ENCODE measurements at regions of chr1 and their contacts with region 1.

Region 1: GRCh38 chr1:25031966-25032667 is 102.0 kb upstream of the RUNX3 start:
- DNase-seq: peak; percentile 43 to 94 (median 57)
- ATAC-seq: peak; percentile 76
- H3K4me3 ChIP-seq: no peak overlapping the region
- H3K4me3 Mint-ChIP-seq: peak overlapping the region; percentile 32
- H3K27ac ChIP-seq: peak overlapping the region; percentile 84
- H3K27ac Mint-ChIP-seq: peak overlapping the region; percentile 84
- H3K4me1 ChIP-seq: peaks cover 99% of the 10 kb centered on the region
- H3K4me1 Mint-ChIP-seq: peaks cover 71% of the 10 kb centered on the region
- H3K27me3 ChIP-seq: no peaks in the 10 kb centered on the region
- H3K27me3 Mint-ChIP-seq: no peaks in the 10 kb centered on the region
- CTCF ChIP-seq: no peak

Region 2: DNA sequence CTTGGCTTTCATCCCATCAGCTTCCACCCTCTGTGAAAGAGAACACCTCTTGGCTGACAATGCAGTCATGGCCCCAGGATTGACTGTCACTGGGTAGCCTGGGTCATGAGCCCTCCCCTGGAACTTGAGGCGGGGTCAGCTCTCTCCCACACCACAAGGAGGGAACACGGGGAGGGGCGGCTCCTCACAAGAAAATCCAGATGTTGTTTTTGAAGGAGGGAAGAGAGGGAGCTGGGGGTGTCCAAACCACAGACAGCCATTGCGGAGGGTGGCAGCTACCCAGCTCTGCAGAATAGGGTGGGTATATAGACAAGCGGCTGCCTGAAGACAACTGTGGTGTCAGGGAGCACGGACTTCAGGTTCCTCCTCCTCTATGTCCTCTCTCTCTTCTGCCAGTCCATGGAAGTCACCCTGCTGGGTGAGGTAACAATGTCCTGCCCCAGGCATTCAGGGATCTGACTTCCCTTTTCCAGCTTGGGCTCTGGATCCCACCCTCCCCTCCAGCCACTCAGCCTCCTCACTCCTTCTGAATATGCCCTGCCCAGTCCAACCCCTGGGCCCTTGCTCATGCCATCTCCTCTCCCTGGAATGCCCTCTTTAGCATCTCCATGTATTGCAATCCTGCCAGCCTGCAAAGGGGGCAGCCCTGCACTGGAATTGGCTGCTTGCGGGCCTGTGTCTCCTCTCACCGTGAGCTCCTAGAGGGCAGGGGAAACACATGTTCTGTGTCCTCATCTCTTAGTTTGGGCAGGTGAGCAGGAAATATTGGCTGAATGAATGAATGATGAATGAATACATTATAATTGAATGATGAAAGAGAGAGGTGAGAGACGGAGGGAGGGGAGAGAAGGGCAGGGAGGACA is 41.1 kb before region 1 on chr1:
- CTCF ChIA-PET with region 1: interaction called, 9 read pairs
- POLR2A ChIA-PET with region 1: interaction called, 5 read pairs
- intact Hi-C with region 1: loop called (anchors 2 to 5 kb)
- DNase-seq: peak in 5 of 14 experiments; percentile 31 to 66 (median 39)
- ATAC-seq: peak; percentile 24
- H3K4me3 ChIP-seq: no peak overlapping the region
- H3K4me3 Mint-ChIP-seq: peak overlapping the region; percentile 18
- H3K27ac ChIP-seq: peak overlapping the region; percentile 79 to 87
- H3K27ac Mint-ChIP-seq: peak overlapping the region; percentile 93
- H3K4me1 ChIP-seq: peaks cover 99% of the 10 kb centered on the region
- H3K4me1 Mint-ChIP-seq: peaks cover 93% of the 10 kb centered on the region
- H3K27me3 ChIP-seq: no peaks in the 10 kb centered on the region
- H3K27me3 Mint-ChIP-seq: no peaks in the 10 kb centered on the region
- CTCF ChIP-seq: no peak

Region 3: DNA sequence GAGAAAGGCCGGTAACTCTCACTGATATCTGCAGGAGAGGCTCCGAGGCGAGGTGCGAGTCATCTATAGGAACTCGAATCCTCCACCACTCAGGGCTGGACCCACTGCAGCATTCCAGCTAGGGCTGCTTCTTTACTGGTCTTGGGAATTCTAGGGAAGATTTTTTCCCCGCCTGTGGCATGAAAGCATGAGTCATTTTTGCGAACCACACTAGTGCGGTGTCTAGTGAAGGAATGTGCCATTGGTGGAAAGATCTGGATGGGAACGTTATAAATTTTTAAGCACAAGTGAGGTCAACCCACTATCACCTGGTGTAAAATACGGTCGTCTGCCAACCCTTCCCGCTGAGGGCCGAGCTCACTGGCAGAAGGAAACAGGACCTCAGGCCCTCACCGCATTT is 150.5 kb after region 1 on chr1:
- CTCF ChIA-PET with region 1: no interaction called
- POLR2A ChIA-PET with region 1: no interaction called
- intact Hi-C with region 1: no loop called
- DNase-seq: peak in 1 of 14 experiments; percentile 8
- ATAC-seq: no peak
- H3K4me3 ChIP-seq: no peak overlapping the region
- H3K4me3 Mint-ChIP-seq: no peak overlapping the region
- H3K27ac ChIP-seq: no peak overlapping the region
- H3K27ac Mint-ChIP-seq: no peak overlapping the region
- H3K4me1 ChIP-seq: no peaks in the 10 kb centered on the region
- H3K4me1 Mint-ChIP-seq: no peaks in the 10 kb centered on the region
- H3K27me3 ChIP-seq: no peaks in the 10 kb centered on the region
- H3K27me3 Mint-ChIP-seq: no peaks in the 10 kb centered on the region
- CTCF ChIP-seq: no peak

Region 4: DNA sequence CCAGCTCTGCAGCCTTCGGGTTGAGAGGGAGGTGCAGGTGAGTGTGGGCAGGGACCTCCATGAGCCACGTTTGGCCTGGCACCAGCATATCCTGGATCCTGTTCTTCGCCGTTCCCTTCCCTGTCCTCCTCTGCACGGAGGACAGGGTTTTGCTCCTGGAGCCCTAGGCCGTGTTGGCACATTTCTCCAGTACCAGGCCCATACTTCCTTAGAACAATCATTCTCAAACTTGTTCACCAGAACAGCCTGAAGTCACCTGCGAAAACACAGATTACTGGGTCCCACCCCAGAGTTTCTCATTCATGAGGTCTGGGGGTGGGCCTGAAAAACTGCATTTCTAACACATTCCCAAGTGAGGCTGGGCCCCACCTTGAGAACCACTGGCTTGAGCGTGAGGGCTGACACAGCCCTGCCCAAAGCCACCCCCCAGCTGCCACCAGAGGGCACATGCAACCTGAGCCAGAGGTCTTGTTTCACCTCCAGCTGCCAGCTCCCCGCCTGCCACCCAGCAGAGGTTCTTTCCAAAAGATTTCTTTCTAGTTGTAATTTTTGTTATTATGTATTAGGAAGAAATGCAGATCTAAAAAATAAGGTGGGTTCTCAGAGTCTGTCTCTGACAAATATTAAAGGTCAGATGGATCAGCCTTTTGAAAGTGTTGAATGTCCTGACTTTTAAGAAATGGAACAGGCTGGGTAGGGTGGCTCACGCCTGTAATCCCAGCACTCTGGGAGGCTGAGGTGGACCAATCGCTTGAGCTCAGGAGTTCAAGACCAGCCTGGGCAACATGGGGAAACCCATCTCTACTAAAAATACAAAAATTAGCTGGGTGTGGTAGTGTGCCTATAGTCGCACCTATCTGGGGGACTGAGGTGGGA is 471.7 kb after region 1 on chr1:
- CTCF ChIA-PET with region 1: no interaction called
- POLR2A ChIA-PET with region 1: no interaction called
- intact Hi-C with region 1: no loop called
- DNase-seq: peak; percentile 66 to 84 (median 76)
- ATAC-seq: peak; percentile 96
- H3K4me3 ChIP-seq: no peak overlapping the region
- H3K4me3 Mint-ChIP-seq: no peak overlapping the region
- H3K27ac ChIP-seq: no peak overlapping the region
- H3K27ac Mint-ChIP-seq: peak overlapping the region; percentile 84
- H3K4me1 ChIP-seq: peaks cover 27% of the 10 kb centered on the region
- H3K4me1 Mint-ChIP-seq: peaks cover 34% of the 10 kb centered on the region
- H3K27me3 ChIP-seq: no peaks in the 10 kb centered on the region
- H3K27me3 Mint-ChIP-seq: no peaks in the 10 kb centered on the region
- CTCF ChIP-seq: peak; percentile 86